Activated CD4-positive, alpha-beta T cell treated with anti-CD3 and anti-CD28 coated beads for 36 hours (primary cell): ENCODE measurements at regions of chr17 and their contacts with region 1.

Region 1: DNA sequence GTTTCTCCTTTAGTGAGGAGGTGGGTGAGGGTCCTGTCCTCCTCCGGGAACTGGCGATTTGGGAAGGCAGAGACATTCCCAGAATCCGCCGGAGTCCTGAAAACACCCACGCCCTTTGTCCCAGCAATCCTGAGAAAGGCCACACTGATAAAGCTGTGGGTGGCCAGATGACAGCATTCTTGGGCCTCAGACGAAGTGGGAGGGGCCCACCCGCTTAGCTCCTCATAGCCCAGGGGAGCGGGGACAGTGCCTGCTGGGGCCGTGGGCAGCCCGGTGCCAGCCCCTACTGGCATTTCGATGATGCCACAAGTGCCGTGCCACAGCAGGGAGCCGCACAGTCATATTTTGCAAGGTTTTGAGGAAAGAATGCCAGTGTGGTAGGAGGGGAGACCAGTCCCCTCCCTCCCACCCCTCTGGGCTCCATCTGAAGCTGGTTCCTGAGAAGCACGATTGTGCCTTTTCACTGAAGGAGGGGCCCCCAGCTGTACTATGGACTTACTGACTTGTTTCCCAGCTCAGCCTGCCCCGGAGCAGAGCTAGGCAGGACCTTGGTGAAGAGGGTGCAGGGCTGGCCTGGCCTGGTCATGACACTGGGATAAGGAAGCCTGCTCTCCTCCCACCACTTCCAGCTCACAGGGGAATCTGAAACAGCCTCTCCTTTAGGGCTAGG is 20.9 kb upstream of the MPRIP start:
- DNase-seq: no peak
- ATAC-seq: no peak
- H3K4me3 Mint-ChIP-seq: no peak overlapping the region
- H3K27ac Mint-ChIP-seq: no peak overlapping the region
- H3K4me1 Mint-ChIP-seq: peaks cover 15% of the 10 kb centered on the region
- H3K27me3 Mint-ChIP-seq: no peaks in the 10 kb centered on the region

Region 2: GRCh38 chr17:17067257-17067656 is 45.9 kb after region 1 on chr17:
- CTCF ChIA-PET with region 1: no interaction called
- POLR2A ChIA-PET with region 1: no interaction called
- intact Hi-C with region 1: loop called in 1 of 2 experiments (anchors 5 kb)
- DNase-seq: no peak
- ATAC-seq: no peak
- H3K4me3 Mint-ChIP-seq: no peak overlapping the region
- H3K27ac Mint-ChIP-seq: peak overlapping the region; percentile 56
- H3K4me1 Mint-ChIP-seq: peaks cover 61% of the 10 kb centered on the region
- H3K27me3 Mint-ChIP-seq: no peaks in the 10 kb centered on the region